ENCODE measurements at regions of chr10 and their contacts with region 1.

Region 1: GRCh38 chr10:61987951-61988379 is 86.5 kb downstream of the ARID5B start:
- DNase-seq: peak; percentile 40
- ATAC-seq: peak; percentile 89
- H3K4me3 Mint-ChIP-seq: peak overlapping the region; percentile 29
- H3K27ac Mint-ChIP-seq: peak overlapping the region; percentile 99
- H3K4me1 Mint-ChIP-seq: peaks cover 92% of the 10 kb centered on the region
- H3K27me3 Mint-ChIP-seq: no peaks in the 10 kb centered on the region

Region 2: DNA sequence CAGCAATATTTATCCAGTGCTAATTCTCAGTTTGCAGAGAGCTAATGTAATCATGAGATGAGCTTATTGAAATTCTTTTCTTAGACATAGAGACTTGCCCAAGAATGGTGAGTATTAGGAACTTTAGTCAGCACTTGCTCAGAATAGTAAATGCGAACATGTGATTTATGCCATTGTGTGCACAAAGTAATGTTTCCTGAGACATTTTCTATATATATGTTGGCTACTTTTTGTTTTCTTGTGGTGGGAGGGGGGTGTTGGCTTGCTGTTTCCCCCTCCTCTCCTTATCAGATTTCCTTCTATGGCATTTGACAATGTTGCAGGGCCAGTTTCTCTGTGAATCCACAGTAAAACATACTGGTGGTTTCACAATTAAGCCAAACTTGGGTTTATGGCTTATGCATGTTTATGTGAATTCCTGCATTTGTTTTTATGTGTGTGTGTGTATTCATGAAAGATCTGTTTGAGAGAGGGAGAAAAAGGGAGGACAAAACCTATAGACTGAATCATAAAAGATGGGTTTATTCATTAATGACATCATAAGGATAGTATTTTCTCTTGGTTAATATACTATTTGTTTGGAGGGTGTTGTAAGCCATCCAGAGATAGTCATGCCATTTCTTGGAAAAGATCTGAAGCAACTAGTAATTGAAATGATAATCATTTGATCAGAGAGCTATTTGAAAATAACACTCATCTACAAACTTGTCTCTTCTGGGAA is 50.2 kb before region 1 on chr10:
- CTCF ChIA-PET with region 1: interaction called, 9 read pairs
- POLR2A ChIA-PET with region 1: interaction called, 18 read pairs
- intact Hi-C with region 1: no loop called
- DNase-seq: no peak
- ATAC-seq: peak; percentile 62
- H3K4me3 Mint-ChIP-seq: peak overlapping the region; percentile 41
- H3K27ac Mint-ChIP-seq: peak overlapping the region; percentile 92
- H3K4me1 Mint-ChIP-seq: peaks cover 94% of the 10 kb centered on the region
- H3K27me3 Mint-ChIP-seq: no peaks in the 10 kb centered on the region

Region 3: DNA sequence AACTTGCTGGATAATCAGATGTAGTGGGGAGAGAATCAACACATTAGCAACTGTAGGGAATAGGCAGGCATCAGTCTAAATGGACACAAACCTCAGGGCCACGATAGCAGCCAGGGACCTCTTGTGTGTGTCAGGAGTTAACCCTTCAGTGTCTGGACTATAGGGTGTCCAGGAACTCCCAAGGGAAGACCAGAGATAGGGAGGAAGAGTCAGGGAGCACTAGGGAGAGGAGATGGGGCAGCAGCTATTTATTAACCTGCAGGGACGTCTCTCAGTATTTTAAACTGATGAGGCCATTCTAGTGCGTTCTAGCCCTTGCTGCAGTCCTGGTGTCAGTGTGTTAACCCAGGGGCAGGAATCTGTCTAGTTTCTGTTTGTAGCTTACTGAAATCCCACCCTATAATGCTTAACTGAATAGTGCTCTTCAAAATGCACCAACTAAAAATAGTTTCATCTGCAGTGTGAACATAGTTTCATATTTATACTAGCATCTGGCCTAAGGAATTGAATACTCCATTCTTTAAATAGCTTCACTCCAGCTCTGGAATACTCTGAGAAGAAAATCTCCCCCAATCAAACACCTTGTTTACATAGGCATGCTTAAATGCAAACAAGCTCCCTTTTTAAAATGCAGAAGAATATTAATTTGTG is 23.8 kb before region 1 on chr10:
- CTCF ChIA-PET with region 1: no interaction called
- POLR2A ChIA-PET with region 1: interaction called, 4 read pairs
- intact Hi-C with region 1: loop called in 1 of 2 experiments (anchors 1 kb)
- DNase-seq: no peak
- ATAC-seq: no peak
- H3K4me3 Mint-ChIP-seq: no peak overlapping the region
- H3K27ac Mint-ChIP-seq: peak overlapping the region; percentile 73
- H3K4me1 Mint-ChIP-seq: peaks cover 92% of the 10 kb centered on the region
- H3K27me3 Mint-ChIP-seq: no peaks in the 10 kb centered on the region

Region 4: GRCh38 chr10:61974601-61975390 is 13.2 kb before region 1 on chr10:
- CTCF ChIA-PET with region 1: interaction called, 10 read pairs
- POLR2A ChIA-PET with region 1: no interaction called
- intact Hi-C with region 1: loop called in 1 of 2 experiments (anchors 1 kb)
- DNase-seq: peak; percentile 60
- ATAC-seq: no peak
- H3K4me3 Mint-ChIP-seq: no peak overlapping the region
- H3K27ac Mint-ChIP-seq: peak overlapping the region; percentile 47
- H3K4me1 Mint-ChIP-seq: peaks cover 68% of the 10 kb centered on the region
- H3K27me3 Mint-ChIP-seq: no peaks in the 10 kb centered on the region

Region 5: GRCh38 chr10:62005281-62005680 is 17.3 kb after region 1 on chr10:
- CTCF ChIA-PET with region 1: interaction called, 4 read pairs
- POLR2A ChIA-PET with region 1: interaction called, 10 read pairs
- intact Hi-C with region 1: loop called in 1 of 2 experiments (anchors 1 kb)
- DNase-seq: no peak
- ATAC-seq: no peak
- H3K4me3 Mint-ChIP-seq: no peak overlapping the region
- H3K27ac Mint-ChIP-seq: peak overlapping the region; percentile 52
- H3K4me1 Mint-ChIP-seq: peaks cover 86% of the 10 kb centered on the region
- H3K27me3 Mint-ChIP-seq: no peaks in the 10 kb centered on the region

Region 6: DNA sequence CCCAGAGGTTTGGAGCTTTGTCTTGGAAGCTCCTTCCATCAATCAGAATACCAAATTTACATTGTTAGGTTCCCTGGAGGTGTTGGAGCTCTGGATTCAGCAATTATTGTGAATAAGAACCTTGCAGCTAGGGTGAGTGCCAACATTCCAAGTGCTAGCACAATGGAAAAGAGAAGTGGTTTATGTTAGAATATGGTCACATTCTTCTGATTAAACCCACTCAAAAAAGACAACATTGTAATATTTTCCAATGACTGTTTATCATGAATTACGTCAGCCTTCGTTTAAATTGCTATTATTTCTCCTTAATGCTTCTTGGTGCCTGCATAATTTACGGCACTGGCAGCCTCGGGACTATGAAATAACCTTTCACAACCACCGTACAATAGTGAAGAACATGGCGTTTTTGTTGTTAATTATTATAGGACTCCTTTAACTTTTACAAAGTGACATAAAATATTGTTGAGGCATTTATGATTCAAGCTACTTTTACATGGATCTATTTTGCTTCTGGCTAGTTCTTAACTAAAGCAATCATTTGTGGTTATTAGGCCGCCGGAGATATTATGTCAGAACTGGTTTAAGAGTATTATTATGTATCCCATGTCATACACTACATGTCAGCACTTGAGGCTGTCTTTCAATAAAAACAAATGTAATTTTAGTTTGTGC is 31.2 kb after region 1 on chr10:
- CTCF ChIA-PET with region 1: interaction called, 20 read pairs
- POLR2A ChIA-PET with region 1: interaction called, 10 read pairs
- intact Hi-C with region 1: loop called (anchors 1 to 2 kb)
- DNase-seq: no peak
- ATAC-seq: no peak
- H3K4me3 Mint-ChIP-seq: peak overlapping the region; percentile 11
- H3K27ac Mint-ChIP-seq: peak overlapping the region; percentile 100
- H3K4me1 Mint-ChIP-seq: peaks cover 88% of the 10 kb centered on the region
- H3K27me3 Mint-ChIP-seq: no peaks in the 10 kb centered on the region

Region 7: GRCh38 chr10:63355682-63356081 is 1367.7 kb after region 1 on chr10:
- CTCF ChIA-PET with region 1: no interaction called
- POLR2A ChIA-PET with region 1: no interaction called
- intact Hi-C with region 1: loop called in 1 of 2 experiments (anchors 5 kb)
- DNase-seq: no peak
- ATAC-seq: no peak
- H3K4me3 Mint-ChIP-seq: no peak overlapping the region
- H3K27ac Mint-ChIP-seq: peak overlapping the region; percentile 40
- H3K4me1 Mint-ChIP-seq: peaks cover 34% of the 10 kb centered on the region
- H3K27me3 Mint-ChIP-seq: no peaks in the 10 kb centered on the region